A673 (cell line): ENCODE measurements at regions of chr6 and their contacts with region 1.

Region 1: GRCh38 chr6:113858480-113859348 is 1.6 kb downstream of the MARCKS start:
- DNase-seq: peak; percentile 92
- H3K4me3 ChIP-seq: peak overlapping the region; percentile 86
- H3K27ac ChIP-seq: peak overlapping the region; percentile 89
- H3K4me1 ChIP-seq: peaks cover 11% of the 10 kb centered on the region
- H3K27me3 ChIP-seq: no peaks in the 10 kb centered on the region
- CTCF ChIP-seq: peak; percentile 78

Region 2: GRCh38 chr6:112780498-112781096 is 1078.1 kb before region 1 on chr6:
- CTCF ChIA-PET with region 1: no interaction called
- POLR2A ChIA-PET with region 1: no interaction called
- intact Hi-C with region 1: loop called (anchors 1 kb)
- DNase-seq: peak; percentile 88
- H3K4me3 ChIP-seq: no peak overlapping the region
- H3K27ac ChIP-seq: no peak overlapping the region
- H3K4me1 ChIP-seq: peaks cover 5% of the 10 kb centered on the region
- H3K27me3 ChIP-seq: no peaks in the 10 kb centered on the region
- CTCF ChIP-seq: peak; percentile 82

Region 3: DNA sequence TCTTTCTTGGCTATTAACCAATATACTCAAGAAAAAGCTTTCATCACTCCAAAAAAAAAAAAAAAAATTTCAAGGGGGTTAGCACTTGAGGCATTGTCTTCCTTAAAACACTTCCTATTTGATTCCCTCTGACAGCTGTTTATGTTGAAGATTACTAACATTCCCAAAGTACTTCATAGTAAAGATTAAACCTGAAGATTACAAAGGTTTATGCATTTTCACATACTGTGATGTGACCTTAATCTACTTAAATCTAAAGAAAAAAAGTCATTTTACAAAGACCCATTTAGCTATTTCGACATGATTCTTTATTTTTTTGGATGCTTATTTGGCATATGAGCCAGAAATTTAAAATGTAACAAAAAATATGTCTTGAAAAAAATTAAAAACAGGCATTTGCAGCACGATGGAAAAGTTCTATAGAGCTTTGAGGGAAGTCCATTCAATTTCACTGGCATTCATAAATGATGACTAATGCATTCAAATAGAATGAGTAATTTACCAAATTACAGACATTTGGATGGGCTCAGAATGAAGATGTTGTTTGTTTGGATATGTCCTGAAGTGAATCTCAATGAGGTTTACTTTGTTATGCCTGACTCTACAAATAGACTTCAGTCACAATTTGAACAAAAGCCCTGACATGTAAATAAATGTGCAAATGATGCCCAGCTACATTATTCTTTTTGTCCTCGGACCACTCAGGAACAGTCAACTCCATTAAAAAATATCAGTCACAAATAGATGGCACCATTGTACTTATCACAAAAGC is 676.2 kb before region 1 on chr6:
- CTCF ChIA-PET with region 1: no interaction called
- POLR2A ChIA-PET with region 1: no interaction called
- intact Hi-C with region 1: loop called (anchors 5 kb)
- DNase-seq: peak; percentile 72
- H3K4me3 ChIP-seq: no peak overlapping the region
- H3K27ac ChIP-seq: no peak overlapping the region
- H3K4me1 ChIP-seq: peaks cover 8% of the 10 kb centered on the region
- H3K27me3 ChIP-seq: no peaks in the 10 kb centered on the region
- CTCF ChIP-seq: 0 out of 2 replicates have a peak, but pooled peaks have one; percentile 14

Region 4: DNA sequence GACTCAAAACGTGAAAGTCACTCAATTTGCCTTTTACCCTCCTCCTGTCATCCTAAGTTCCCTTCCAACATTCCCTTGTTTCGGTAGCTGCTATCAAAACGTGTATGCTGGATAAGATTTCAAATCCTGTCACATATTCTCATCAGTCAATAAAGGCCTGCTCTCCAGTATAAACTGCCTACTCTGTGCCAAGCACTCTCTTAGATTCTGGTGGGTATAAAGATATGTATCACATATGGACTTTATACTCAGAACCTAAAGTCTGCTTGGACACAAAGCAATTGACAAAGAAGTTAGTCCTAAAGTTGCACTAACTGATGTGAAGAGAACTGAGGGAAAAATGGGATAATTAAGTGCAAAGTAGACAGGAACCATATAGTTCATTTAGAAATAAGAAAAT is 478.1 kb before region 1 on chr6:
- CTCF ChIA-PET with region 1: no interaction called
- POLR2A ChIA-PET with region 1: interaction called, 12 read pairs
- intact Hi-C with region 1: no loop called
- DNase-seq: no peak
- H3K4me3 ChIP-seq: no peak overlapping the region
- H3K27ac ChIP-seq: no peak overlapping the region
- H3K4me1 ChIP-seq: peaks cover 22% of the 10 kb centered on the region
- H3K27me3 ChIP-seq: no peaks in the 10 kb centered on the region
- CTCF ChIP-seq: no peak

Region 5: GRCh38 chr6:113495506-113495905 is 363.2 kb before region 1 on chr6:
- CTCF ChIA-PET with region 1: no interaction called
- POLR2A ChIA-PET with region 1: no interaction called
- intact Hi-C with region 1: loop called (anchors 2 kb)
- DNase-seq: peak; percentile 93
- H3K4me3 ChIP-seq: no peak overlapping the region
- H3K27ac ChIP-seq: peak overlapping the region; percentile 59
- H3K4me1 ChIP-seq: peaks cover 23% of the 10 kb centered on the region
- H3K27me3 ChIP-seq: no peaks in the 10 kb centered on the region
- CTCF ChIP-seq: no peak

Region 6: DNA sequence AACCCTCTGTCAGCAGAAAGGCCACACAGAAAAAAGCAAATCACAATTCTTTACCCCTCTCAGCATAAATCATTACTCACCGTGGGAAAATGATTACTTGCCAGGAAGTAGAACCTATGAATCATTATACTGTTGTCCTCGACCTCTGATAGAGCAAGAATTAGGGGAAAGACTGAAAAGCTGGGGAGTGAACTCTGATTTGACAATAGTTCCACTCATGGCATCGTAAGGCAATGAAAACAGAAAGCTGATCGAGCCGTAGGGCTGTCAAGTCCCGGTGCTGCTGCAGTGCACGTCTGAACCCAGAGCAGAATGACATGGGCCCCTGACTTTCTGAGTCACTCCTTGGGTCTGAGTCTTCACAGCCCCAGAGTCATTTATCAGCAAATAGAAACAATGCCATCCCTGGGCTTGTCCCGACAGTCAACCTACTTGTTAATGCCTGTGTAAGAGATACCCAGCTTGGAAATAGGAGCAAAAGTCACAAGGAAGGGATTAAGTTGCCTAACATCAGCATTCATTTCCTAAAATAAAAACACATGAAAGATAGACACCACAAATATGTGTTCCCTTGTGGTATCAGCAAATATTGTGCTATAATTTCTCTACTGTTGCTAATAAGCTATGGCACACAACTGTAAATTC is 226.4 kb before region 1 on chr6:
- CTCF ChIA-PET with region 1: no interaction called
- POLR2A ChIA-PET with region 1: no interaction called
- intact Hi-C with region 1: loop called (anchors 10 kb)
- DNase-seq: peak; percentile 46
- H3K4me3 ChIP-seq: peak overlapping the region; percentile 21
- H3K27ac ChIP-seq: no peak overlapping the region
- H3K4me1 ChIP-seq: peaks cover 6% of the 10 kb centered on the region
- H3K27me3 ChIP-seq: no peaks in the 10 kb centered on the region
- CTCF ChIP-seq: no peak